Lower lobe of right lung (tissue), 2 donors: ENCODE measurements at regions of chr9 and their contacts with region 1.

Region 1: DNA sequence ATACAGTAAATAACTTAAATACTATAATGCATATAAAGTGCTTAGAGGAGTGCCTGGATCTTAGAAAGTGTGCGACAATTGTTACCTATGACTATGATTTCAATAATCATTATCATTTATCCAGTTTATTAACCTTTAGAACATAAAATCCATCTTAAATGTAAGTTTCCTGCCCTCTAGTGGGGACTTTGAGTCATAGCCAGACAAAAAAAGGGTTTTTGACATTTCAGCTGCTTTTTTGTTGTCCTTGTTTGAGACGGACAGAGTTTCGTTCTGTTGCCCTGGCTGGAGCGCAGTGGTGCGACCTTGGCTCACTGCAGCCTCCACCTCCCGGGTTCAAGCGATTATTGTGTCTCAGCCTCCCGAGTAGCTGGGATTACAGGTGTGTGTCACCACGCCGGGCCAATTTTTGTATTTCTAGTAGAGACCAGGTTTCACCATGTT is 9.7 kb upstream of the C9orf152 start:
- DNase-seq: no peak
- ATAC-seq: peak in 1 of 2 donors; percentile 22
- H3K4me3 ChIP-seq: no peak overlapping the region
- H3K27ac ChIP-seq: no peak overlapping the region
- H3K4me1 ChIP-seq: peaks cover 8% of the 10 kb centered on the region
- H3K27me3 ChIP-seq: no peaks in the 10 kb centered on the region
- CTCF ChIP-seq: peak; percentile 80

Region 2: DNA sequence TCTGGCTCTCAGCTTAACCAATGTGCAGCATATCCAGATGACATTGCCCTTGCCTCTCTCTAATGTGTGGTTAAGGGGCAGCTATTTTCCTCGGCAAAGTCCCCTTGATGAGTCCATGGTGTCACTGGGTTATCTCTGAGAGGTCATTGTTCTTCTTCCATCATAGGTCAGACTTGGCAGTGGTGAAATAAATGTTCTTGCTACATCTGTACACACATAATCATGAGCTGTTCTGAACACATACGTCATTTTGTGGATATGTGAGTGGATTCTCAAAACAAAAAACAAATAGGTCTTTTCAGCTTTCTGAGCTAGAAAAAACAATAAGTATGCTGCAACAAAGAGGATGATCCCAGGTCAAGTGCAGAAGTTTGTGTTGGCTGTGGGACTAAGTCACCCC is 584.9 kb before region 1 on chr9:
- intact Hi-C with region 1: no loop called
- DNase-seq: no peak
- ATAC-seq: no peak
- H3K4me3 ChIP-seq: no peak overlapping the region
- H3K27ac ChIP-seq: no peak overlapping the region
- H3K4me1 ChIP-seq: no peaks in the 10 kb centered on the region
- H3K27me3 ChIP-seq: no peaks in the 10 kb centered on the region
- CTCF ChIP-seq: no peak

Region 3: DNA sequence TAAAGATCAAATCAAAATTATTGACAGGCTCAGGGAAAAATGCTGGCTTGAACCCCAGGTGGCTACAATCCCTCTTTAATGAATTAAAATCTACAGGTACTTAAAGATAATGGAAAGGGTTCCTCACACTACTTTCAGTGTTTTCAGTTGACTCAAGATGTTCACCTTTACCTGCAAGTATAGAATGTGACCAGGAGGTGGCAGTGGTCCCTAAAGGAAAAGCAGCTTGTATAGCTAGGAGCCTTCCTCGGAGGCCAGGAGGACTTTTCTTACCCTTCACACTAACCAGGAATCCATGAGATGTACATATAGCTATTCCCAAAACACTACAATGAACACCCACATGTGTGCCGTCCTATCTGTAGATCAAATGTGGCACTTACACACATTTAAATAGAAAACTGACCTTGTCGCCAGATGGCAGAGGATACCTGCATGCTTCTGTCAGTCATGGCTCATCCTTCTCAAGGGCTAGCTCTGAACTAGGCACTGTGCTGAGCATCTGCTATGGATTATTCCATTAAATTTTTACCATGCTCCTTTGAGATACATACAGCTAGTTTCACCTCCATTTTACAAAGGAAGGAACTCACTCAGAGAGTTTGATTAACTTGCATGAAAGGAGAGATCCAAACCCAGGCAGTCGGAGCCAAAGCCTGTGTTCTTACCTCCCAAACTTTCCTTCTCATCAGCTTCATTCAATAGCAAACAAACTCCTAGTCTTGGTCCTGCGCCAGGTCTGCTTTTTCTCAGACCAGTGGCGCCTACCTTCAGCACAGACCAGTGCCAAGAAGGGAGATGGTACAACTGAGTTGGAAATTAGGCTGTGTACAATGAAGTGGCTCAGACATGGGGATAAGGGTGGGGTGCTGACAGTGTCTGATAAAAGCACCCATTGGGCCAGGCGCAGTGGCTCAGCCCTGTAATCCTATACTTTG is 34.2 kb before region 1 on chr9:
- intact Hi-C with region 1: loop called (anchors 5 kb)
- DNase-seq: no peak
- ATAC-seq: peak; percentile 85 to 88
- H3K4me3 ChIP-seq: no peak overlapping the region
- H3K27ac ChIP-seq: no peak overlapping the region
- H3K4me1 ChIP-seq: peaks cover 14% of the 10 kb centered on the region
- H3K27me3 ChIP-seq: no peaks in the 10 kb centered on the region
- CTCF ChIP-seq: peak; percentile 76